Activated T-helper 1 cell treated with anti-CD3 and anti-CD28 coated beads, Interleukin-12 subunit alpha, Interleukin-12 subunit beta, Interleukin-2, Interleukin-4 antibody, amounts not matched to agents 30 ng/mL and 10 ng/mL and 1 ng/mL, durations not matched to agents 14 hours and 24 hours and 36 hours (primary cell): ENCODE measurements at regions of chr10 and their contacts with region 1.

Region 1: GRCh38 chr10:68901104-68901927 is at the start of gene DDX50:
- DNase-seq: peak; percentile 95
- H3K4me3 Mint-ChIP-seq: peak within 1 kb of the TSS; percentile 92
- H3K27ac Mint-ChIP-seq: peak within 1 kb of the TSS; percentile 97
- H3K4me1 Mint-ChIP-seq: peaks cover 49% of the 10 kb centered on the region
- H3K27me3 Mint-ChIP-seq: no peaks in the 10 kb centered on the region
- total RNA-seq, gene DDX50: 53.0 and 55.0 TPM in 2 replicates

Region 2: GRCh38 chr10:68105820-68106219 is 795.5 kb before region 1 on chr10:
- intact Hi-C with region 1: no loop called
- DNase-seq: no peak
- H3K4me3 Mint-ChIP-seq: no peak overlapping the region
- H3K27ac Mint-ChIP-seq: no peak overlapping the region
- H3K4me1 Mint-ChIP-seq: no peaks in the 10 kb centered on the region
- H3K27me3 Mint-ChIP-seq: peaks cover 7% of the 10 kb centered on the region

Region 3: DNA sequence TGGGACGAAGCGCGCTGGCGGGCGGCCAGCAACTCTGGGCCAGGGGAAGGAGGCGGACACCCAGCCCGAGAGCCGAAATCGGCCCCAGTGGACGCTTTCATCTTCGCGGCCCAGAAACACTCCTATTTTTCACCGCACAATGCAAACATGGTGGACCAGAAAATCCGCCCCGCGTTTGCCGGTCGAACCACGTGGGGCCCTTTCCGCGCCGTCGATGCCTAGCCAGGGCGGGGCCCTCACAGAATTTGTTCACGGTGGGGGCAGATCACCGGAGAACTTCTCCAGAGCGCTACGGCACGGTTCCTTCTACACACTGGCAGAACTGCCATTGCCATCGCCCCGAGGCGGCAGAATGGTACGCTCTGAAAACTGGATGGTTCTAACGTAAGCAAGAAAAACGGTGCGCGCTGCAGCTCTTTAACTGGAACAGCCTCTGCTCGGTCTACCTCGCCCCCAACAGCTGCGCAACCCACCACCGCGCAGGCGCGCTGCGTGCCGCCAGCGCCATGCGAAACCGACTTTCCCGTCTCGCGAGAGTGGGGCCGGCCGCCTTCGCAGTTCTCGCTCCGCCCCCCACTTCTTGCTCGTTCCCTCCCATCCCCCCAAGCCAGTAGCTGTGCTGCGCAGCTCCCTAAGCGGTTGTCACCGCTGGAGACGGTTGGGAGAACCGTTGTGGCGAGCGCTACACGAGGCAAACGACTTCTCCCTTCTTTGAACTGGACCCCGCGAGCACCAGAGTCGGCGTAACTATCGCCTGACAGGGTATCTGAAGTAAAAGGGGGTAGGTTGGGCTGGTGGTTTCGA is 569.7 kb before region 1 on chr10 and contains the start of gene HNRNPH3:
- intact Hi-C with region 1: loop called (anchors 1 kb)
- DNase-seq: peak; percentile 99
- H3K4me3 Mint-ChIP-seq: peak within 1 kb of the TSS; percentile 100
- H3K27ac Mint-ChIP-seq: peak within 1 kb of the TSS; percentile 99
- H3K4me1 Mint-ChIP-seq: peaks cover 66% of the 10 kb centered on the region
- H3K27me3 Mint-ChIP-seq: peaks cover 1% of the 10 kb centered on the region
- total RNA-seq, gene HNRNPH3: 176 and 184 TPM in 2 replicates

Region 4: GRCh38 chr10:68526626-68527307 is 374.5 kb before region 1 on chr10:
- intact Hi-C with region 1: loop called (anchors 1 kb)
- DNase-seq: no peak
- H3K4me3 Mint-ChIP-seq: peak overlapping the region; percentile 93
- H3K27ac Mint-ChIP-seq: peak overlapping the region; percentile 84
- H3K4me1 Mint-ChIP-seq: peaks cover 7% of the 10 kb centered on the region
- H3K27me3 Mint-ChIP-seq: no peaks in the 10 kb centered on the region

Region 5: GRCh38 chr10:68784476-68784875 is 116.8 kb before region 1 on chr10:
- intact Hi-C with region 1: loop called (anchors 5 kb)
- DNase-seq: no peak
- H3K4me3 Mint-ChIP-seq: no peak overlapping the region
- H3K27ac Mint-ChIP-seq: no peak overlapping the region
- H3K4me1 Mint-ChIP-seq: no peaks in the 10 kb centered on the region
- H3K27me3 Mint-ChIP-seq: no peaks in the 10 kb centered on the region

Region 6: GRCh38 chr10:69092959-69093850 is 191.9 kb after region 1 on chr10:
- intact Hi-C with region 1: loop called (anchors 1 kb)
- DNase-seq: peak; percentile 80
- H3K4me3 Mint-ChIP-seq: peak overlapping the region; percentile 45
- H3K27ac Mint-ChIP-seq: peak overlapping the region; percentile 72
- H3K4me1 Mint-ChIP-seq: peaks cover 51% of the 10 kb centered on the region
- H3K27me3 Mint-ChIP-seq: no peaks in the 10 kb centered on the region